GM12878 (cell line): ENCODE measurements at regions of chr2 and their contacts with region 1.

Region 1: GRCh38 chr2:197255543-197255942 is 55.0 kb downstream of the ANKRD44 start:
- DNase-seq: peak; percentile 81
- ATAC-seq: peak; percentile 94
- H3K4me3 ChIP-seq: peak overlapping the region; percentile 59
- H3K27ac ChIP-seq: peak overlapping the region; percentile 97
- H3K4me1 ChIP-seq: peaks cover 31% of the 10 kb centered on the region
- H3K27me3 ChIP-seq: no peaks in the 10 kb centered on the region
- CTCF ChIP-seq: no peak
- EP300 ChIP-seq: peak; percentile 57 to 66; a peak in 3 of 4 replicates
- POLR2A ChIP-seq: peak; percentile 98
- RAD21 ChIP-seq: peak; percentile 20; the same call in 1 of the 2 replicates

Region 2: DNA sequence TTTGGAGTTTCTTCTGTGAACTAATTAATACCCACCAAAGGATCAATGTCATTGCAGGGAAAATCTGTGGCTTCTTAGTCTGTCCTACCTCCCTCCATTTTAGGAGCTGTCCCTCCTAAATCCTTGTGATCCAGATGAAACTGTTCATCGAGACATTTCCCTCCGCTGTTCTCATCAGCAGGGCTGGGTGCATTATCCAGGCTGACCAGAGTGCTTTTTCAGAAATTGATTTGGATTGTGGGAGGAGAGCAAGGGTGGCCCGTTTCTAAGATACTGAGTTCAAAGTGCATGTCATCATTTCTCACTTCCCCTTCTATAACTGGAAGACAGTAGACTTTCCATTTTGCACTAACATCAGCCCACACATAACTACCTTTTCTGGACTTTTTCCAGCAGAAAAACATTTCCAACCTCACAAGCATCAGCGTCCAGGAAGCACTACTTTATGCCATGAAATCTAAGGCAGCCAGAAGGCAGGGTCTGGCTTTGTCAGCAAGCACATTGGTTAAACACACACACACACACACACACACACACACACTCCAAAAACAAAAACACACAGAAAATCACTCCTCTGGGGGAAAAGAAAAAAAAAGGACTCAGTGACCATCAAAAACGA is 39.1 kb before region 1 on chr2:
- CTCF ChIA-PET with region 1: interaction called, 5 read pairs
- POLR2A ChIA-PET with region 1: interaction called, 43 read pairs
- RAD21 ChIA-PET with region 1: interaction called, 61 read pairs
- SMC1A ChIA-PET with region 1: interaction called, 82 read pairs
- in situ Hi-C with region 1: no loop called
- intact Hi-C with region 1: loop called (anchors 2 kb)
- DNase-seq: peak; percentile 80
- ATAC-seq: peak; percentile 73
- H3K4me3 ChIP-seq: peak overlapping the region; percentile 34
- H3K27ac ChIP-seq: peak overlapping the region; percentile 82
- H3K4me1 ChIP-seq: peaks cover 70% of the 10 kb centered on the region
- H3K27me3 ChIP-seq: no peaks in the 10 kb centered on the region
- CTCF ChIP-seq: no peak
- EP300 ChIP-seq: peak; percentile 46 to 74; a peak in 3 of 4 replicates
- POLR2A ChIP-seq: 0 out of 2 replicates have a peak, but pooled peaks have one; percentile 23
- RAD21 ChIP-seq: 0 out of 2 replicates have a peak, but pooled peaks have one; percentile 16

Region 3: DNA sequence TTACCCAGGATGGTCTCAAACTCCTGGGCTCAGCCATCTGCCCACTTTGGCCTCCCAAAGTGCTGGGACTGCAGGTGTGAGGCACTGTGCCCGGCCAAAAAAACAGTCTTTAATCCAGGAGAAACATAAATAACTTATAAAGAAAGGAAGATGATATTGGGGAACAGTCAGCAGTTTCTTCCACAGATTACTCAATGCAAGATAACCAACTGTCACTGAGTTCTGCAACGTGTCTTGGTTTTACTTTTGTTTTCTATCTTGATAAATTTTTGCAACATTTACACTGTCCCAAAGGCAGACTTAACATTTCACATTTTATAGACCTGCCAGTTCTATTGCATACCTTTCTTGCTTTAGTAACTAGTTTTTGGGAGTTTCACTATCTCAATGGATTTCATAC is 16.1 kb before region 1 on chr2:
- CTCF ChIA-PET with region 1: interaction called, 6 read pairs
- POLR2A ChIA-PET with region 1: interaction called, 47 read pairs
- RAD21 ChIA-PET with region 1: interaction called, 40 read pairs
- SMC1A ChIA-PET with region 1: interaction called, 66 read pairs
- in situ Hi-C with region 1: no loop called
- intact Hi-C with region 1: no loop called
- DNase-seq: no peak
- ATAC-seq: peak; percentile 82
- H3K4me3 ChIP-seq: peak overlapping the region; percentile 56
- H3K27ac ChIP-seq: peak overlapping the region; percentile 77
- H3K4me1 ChIP-seq: peaks cover 49% of the 10 kb centered on the region
- H3K27me3 ChIP-seq: no peaks in the 10 kb centered on the region
- CTCF ChIP-seq: no peak
- EP300 ChIP-seq: no peak
- POLR2A ChIP-seq: no peak
- RAD21 ChIP-seq: no peak

Region 4: GRCh38 chr2:197279997-197280746 is 24.6 kb after region 1 on chr2:
- CTCF ChIA-PET with region 1: interaction called, 11 read pairs
- POLR2A ChIA-PET with region 1: interaction called, 4 read pairs
- RAD21 ChIA-PET with region 1: interaction called, 4 read pairs
- SMC1A ChIA-PET with region 1: interaction called, 6 read pairs
- in situ Hi-C with region 1: no loop called
- intact Hi-C with region 1: no loop called
- DNase-seq: no peak
- ATAC-seq: peak; percentile 82
- H3K4me3 ChIP-seq: peak overlapping the region; percentile 33; the same call in 1 of the 2 replicates
- H3K27ac ChIP-seq: peak overlapping the region; percentile 36
- H3K4me1 ChIP-seq: peaks cover 11% of the 10 kb centered on the region
- H3K27me3 ChIP-seq: no peaks in the 10 kb centered on the region
- CTCF ChIP-seq: no peak
- EP300 ChIP-seq: 0 out of 4 replicates have a peak, but pooled peaks of 1 of the 2 experiments have one; percentile 12
- POLR2A ChIP-seq: no peak
- RAD21 ChIP-seq: no peak